ENCODE measurements at regions of chr14 and their contacts with region 1.

Region 1: GRCh38 chr14:102516531-102517415 is 7.2 kb upstream of the ANKRD9 start:
- DNase-seq: peak; percentile 71 to 90
- ATAC-seq: peak; percentile 90
- H3K4me3 ChIP-seq: peak overlapping the region; percentile 27 to 68
- H3K27ac ChIP-seq: no peak overlapping the region
- H3K4me1 ChIP-seq: no peaks in the 10 kb centered on the region
- H3K27me3 ChIP-seq: no peaks in the 10 kb centered on the region

Region 2: DNA sequence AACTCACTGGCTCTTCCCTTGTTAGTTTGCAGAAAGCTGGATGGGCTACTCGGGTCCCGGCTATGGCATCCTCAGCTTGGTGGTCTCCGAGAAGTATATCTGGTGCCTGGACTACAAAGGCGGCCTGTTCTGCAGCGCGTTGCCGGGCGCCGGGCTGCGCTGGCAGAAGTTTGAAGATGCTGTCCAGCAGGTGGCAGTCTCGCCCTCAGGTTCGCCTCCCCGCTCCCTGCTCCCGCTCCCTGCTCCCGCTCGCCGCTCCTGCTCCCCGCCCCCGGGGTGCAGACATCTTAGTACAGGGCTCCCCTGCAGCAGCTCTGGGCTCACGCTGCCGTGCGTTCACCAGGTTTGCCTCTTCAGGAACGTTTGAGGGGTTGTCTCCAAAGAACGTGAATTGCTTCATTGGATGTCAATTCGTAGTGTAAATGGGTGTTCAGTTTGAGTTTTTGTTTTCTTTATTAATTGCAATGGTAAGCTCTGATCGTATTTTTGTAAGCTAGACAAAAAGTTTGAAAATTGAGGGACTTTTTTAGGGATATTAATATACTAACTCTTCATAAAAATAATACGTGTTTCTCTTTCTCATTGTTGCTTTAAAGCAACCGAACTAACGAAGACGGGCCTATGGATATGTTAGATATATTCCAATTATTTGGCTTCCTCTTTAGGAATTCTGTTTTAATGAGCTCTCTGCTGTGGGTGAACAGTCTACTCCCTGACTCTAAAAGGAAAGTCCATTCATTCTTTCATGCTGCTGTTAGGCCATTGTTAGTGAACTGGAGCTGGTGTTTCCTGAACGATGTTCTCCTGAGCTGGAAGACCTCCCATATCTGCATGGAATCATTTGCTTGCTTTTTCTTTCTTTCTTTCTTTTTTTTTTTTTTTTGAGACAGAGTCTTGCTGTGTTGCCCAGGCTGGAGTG is 78.5 kb before region 1 on chr14:
- intact Hi-C with region 1: loop called (anchors 1 to 2 kb)
- DNase-seq: peak; percentile 92 to 96
- ATAC-seq: peak; percentile 96
- H3K4me3 ChIP-seq: peak overlapping the region in 1 of 2 donors; percentile 22
- H3K27ac ChIP-seq: no peak overlapping the region
- H3K4me1 ChIP-seq: no peaks in the 10 kb centered on the region
- H3K27me3 ChIP-seq: no peaks in the 10 kb centered on the region